Lower leg skin (tissue), 4 donors: ENCODE measurements at regions of chr10 and their contacts with region 1.

Region 1: GRCh38 chr10:43671656-43672531 is 23.2 kb upstream of the ZNF32 start:
- DNase-seq: peak; percentile 60 to 82
- H3K4me3 ChIP-seq: no peak overlapping the region
- CTCF ChIP-seq: peak in 1 of 3 donors; percentile 64
- POLR2A ChIP-seq: no peak

Region 2: GRCh38 chr10:44386546-44387052 is 714.7 kb after region 1 on chr10:
- intact Hi-C with region 1: loop called (anchors 2 kb)
- DNase-seq: peak in 1 of 2 donors; percentile 93
- H3K4me3 ChIP-seq: no peak overlapping the region
- CTCF ChIP-seq: peak in 1 of 3 donors; percentile 53
- POLR2A ChIP-seq: no peak

Region 3: DNA sequence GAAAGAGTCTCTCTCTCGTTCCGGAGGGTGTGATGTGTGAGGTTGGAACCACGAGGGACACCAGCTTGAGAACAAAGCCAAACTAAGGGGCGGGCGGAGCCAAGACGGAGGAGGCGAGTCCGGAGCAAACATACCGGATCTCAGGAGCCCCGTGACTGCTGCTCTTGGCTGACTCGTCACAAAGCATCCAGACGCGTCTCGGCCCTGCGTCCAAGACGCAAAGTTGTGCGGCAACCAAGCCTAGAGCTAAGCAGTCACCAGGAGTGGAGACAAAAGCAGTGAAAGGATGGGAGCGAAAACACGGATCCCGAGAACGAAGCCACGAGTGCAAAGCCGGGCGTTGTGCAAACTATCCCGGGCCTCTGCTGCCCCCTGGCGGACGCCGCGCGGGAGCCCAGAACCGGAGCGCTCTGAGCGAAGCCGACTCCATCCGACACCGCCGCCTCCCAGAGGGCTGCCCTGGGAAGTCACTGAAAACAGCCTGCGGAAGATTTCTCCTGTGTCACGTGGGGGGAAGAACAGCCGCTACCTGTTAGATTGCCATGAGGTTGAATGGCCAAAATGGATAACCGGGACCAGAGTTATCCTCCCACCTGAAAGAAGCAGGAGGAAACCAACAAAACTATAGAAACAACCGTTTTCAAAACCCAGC is 1192.9 kb after region 1 on chr10:
- intact Hi-C with region 1: loop called (anchors 5 kb)
- DNase-seq: peak; percentile 87 to 98
- H3K4me3 ChIP-seq: peak overlapping the region; percentile 21
- CTCF ChIP-seq: peak in 2 of 3 donors; percentile 39 to 88
- POLR2A ChIP-seq: no peak